HepG2 (cell line): ENCODE measurements at regions of chr18 and their contacts with region 1.

Region 1: DNA sequence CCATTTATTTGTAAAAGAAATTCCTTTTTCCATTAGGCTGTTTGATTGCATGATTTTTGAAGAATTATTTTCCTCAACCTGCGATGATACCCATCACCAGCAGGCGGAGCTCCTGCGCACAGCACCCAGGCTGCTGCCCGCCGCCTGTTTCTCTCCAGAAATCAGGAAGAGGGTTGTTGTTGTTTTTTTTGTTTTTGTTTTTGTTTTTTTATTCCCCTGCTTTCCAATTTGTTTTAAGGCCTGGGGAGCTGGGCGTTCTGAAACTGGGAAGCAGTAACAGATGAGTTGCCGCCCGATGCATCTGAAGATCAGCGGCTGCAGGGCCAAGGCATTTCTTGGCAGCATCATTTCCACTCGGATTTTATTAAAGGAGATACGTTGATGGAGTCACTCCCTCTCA is 132.1 kb downstream of the MBP start:
- DNase-seq: no peak
- ATAC-seq: no peak
- H3K4me3 ChIP-seq: no peak overlapping the region
- H3K27ac ChIP-seq: no peak overlapping the region
- H3K4me1 ChIP-seq: peaks cover 12% of the 10 kb centered on the region
- H3K27me3 ChIP-seq: no peaks in the 10 kb centered on the region; a peak in 1 of 5 replicates
- CTCF ChIP-seq: peak; percentile 79
- EP300 ChIP-seq: no peak
- POLR2A ChIP-seq: no peak
- RAD21 ChIP-seq: 0 out of 2 replicates have a peak, but pooled peaks have one; percentile 35

Region 2: DNA sequence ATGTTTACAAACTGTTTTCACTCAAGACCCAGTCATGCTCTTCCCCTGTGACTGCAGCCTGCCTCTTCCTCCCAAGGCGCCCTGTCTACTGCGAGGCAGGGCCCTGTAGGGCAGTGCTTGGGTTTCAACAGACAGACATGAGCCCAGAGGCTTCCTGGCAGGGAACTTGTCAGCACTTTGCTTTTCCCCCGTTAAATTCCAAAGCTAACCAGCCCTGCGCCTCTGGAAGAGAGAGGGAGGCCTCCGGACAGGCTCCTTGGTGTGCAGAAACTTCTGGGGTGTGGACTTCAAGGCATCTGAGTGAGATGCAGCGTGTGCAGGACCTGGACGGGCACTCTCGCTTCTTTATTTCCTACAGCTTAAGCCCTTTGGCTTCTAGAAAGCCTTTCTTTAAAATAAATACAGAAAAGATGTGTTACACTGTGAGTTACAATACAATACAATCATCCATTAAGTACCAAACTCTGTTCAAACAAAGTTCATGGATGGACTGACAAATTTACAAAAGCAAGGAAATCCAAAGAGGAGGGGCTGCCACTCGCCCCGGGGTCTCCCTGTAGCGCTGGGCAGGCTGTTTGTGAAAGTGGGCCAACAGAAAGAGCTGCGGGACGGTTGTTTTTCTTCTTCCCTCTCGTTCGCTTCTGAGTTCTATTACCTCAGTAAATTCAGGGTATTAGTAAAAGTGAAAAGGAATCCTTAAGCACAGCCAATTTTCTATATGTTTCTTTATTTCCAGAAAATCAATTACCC is 496.7 kb before region 1 on chr18:
- CTCF ChIA-PET with region 1: no interaction called
- POLR2A ChIA-PET with region 1: no interaction called
- in situ Hi-C with region 1: no loop called
- intact Hi-C with region 1: no loop called
- DNase-seq: no peak
- ATAC-seq: peak; percentile 45; the same call in 2 of the 3 replicates
- H3K4me3 ChIP-seq: no peak overlapping the region
- H3K27ac ChIP-seq: no peak overlapping the region
- H3K4me1 ChIP-seq: peaks cover 24% of the 10 kb centered on the region
- H3K27me3 ChIP-seq: peaks cover 1 to 18% of the 10 kb centered on the region in 2 experiments; a peak in 2 of 5 replicates
- CTCF ChIP-seq: no peak
- EP300 ChIP-seq: no peak
- POLR2A ChIP-seq: no peak
- RAD21 ChIP-seq: no peak

Region 3: DNA sequence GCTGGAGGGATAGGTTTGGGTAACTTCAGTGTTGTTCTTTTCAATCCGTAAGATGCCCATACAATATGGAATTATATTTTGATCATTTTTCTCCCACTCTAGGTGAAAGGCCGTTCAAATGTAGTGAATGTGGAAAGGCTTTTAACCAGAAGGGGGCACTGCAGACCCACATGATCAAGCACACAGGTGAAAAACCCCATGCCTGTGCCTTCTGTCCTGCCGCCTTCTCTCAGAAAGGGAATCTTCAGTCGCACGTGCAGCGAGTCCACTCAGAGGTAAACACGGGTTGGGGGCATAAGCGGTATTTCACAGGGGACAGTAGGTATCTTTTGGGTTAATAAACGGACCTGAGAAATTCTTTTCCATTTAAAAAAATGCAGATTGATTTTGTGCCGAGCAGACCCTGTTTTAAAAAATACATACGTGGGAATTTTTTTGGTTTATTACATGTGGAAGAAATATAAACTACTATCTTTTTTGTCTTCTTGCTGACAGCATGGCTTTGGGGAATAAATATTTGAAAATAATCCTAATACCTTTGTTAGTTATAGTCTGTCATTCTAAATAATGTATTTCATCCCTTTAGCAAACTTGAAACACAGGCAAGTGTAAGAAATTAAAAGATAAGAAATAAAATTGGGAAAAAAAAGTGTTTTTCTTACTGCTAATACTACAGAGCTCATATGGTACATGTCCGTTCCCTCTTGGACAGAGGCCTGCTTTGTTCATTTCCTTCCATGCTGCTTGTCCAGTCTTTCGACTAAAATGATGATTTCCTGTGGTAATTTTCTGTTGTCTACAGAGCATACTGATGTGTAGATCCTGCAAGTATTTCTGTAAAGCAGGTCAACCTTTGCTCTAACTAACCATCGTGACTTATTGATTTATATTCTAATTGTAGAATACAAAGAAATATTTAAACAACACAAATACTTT is 124.9 kb before region 1 on chr18:
- CTCF ChIA-PET with region 1: no interaction called
- POLR2A ChIA-PET with region 1: no interaction called
- in situ Hi-C with region 1: no loop called
- intact Hi-C with region 1: no loop called
- DNase-seq: peak; percentile 48
- ATAC-seq: peak; percentile 86
- H3K4me3 ChIP-seq: no peak overlapping the region
- H3K27ac ChIP-seq: no peak overlapping the region
- H3K4me1 ChIP-seq: no peaks in the 10 kb centered on the region
- H3K27me3 ChIP-seq: no peaks in the 10 kb centered on the region
- CTCF ChIP-seq: peak; percentile 75
- EP300 ChIP-seq: no peak
- POLR2A ChIP-seq: no peak
- RAD21 ChIP-seq: no peak

Region 4: DNA sequence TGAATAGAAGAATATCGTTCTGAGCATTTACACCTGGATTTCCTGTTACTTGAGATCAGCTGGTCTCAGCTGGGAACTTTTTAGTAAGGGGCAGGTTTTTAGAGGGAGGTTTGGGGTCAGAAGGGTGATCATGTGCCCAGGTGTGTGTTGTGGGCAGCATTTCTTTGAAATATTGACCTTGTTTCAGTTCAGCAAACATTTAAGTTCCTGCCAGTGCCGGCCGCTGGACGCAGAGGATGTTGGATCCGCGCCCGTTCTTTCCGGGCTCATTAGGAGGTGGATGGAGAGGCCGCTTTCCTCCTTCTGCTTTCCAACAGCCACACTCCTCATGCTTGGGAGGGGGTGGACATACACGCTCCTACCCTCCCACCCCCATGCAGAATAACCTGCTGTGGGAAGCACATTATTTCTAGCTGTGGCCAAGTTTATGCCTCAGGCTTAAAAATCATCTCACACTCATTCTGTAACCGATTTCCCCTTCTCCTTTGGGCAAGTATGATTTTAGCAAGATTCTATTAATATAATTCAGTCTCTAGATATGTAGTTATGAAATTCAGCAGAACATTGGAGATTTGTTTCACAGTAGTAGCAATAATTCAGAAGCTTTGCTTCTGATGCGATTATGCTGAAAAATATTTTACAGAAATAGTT is 46.8 kb before region 1 on chr18:
- CTCF ChIA-PET with region 1: no interaction called
- POLR2A ChIA-PET with region 1: no interaction called
- in situ Hi-C with region 1: no loop called
- intact Hi-C with region 1: no loop called
- DNase-seq: no peak
- ATAC-seq: peak; percentile 50; the same call in 2 of the 3 replicates
- H3K4me3 ChIP-seq: no peak overlapping the region
- H3K27ac ChIP-seq: no peak overlapping the region
- H3K4me1 ChIP-seq: peaks cover 14% of the 10 kb centered on the region
- H3K27me3 ChIP-seq: no peaks in the 10 kb centered on the region
- CTCF ChIP-seq: no peak
- EP300 ChIP-seq: no peak
- POLR2A ChIP-seq: no peak
- RAD21 ChIP-seq: no peak

Region 5: GRCh38 chr18:77054606-77055428 is 54.3 kb after region 1 on chr18:
- CTCF ChIA-PET with region 1: interaction called, 18 read pairs
- POLR2A ChIA-PET with region 1: no interaction called
- in situ Hi-C with region 1: loop called (anchors 5 kb)
- intact Hi-C with region 1: loop called (anchors 1 kb)
- DNase-seq: peak; percentile 87
- ATAC-seq: peak; percentile 92
- H3K4me3 ChIP-seq: peak overlapping the region in 1 of 3 experiments; percentile 58; a peak in 3 of 6 replicates
- H3K27ac ChIP-seq: peak overlapping the region; percentile 72
- H3K4me1 ChIP-seq: peaks cover 43% of the 10 kb centered on the region
- H3K27me3 ChIP-seq: no peaks in the 10 kb centered on the region
- CTCF ChIP-seq: peak; percentile 93
- EP300 ChIP-seq: peak in 1 of 2 experiments; percentile 28; a peak in 1 of 4 replicates
- POLR2A ChIP-seq: no peak
- RAD21 ChIP-seq: peak; percentile 82

Region 6: GRCh38 chr18:77132371-77133050 is 132.0 kb after region 1 on chr18 and contains the start of gene MBP:
- CTCF ChIA-PET with region 1: no interaction called
- POLR2A ChIA-PET with region 1: no interaction called
- in situ Hi-C with region 1: no loop called
- intact Hi-C with region 1: loop called (anchors 5 kb)
- DNase-seq: no peak
- ATAC-seq: peak; percentile 82
- H3K4me3 ChIP-seq: peak within 1 kb of the TSS; percentile 66 to 82 (median 73)
- H3K27ac ChIP-seq: no peak within 1 kb of the TSS
- H3K4me1 ChIP-seq: peaks cover 36% of the 10 kb centered on the region
- H3K27me3 ChIP-seq: peaks cover 4 to 36% of the 10 kb centered on the region in 2 experiments; a peak in 4 of 5 replicates
- CTCF ChIP-seq: no peak
- EP300 ChIP-seq: no peak
- POLR2A ChIP-seq: peak in 1 of 2 experiments; percentile 66; a peak in 1 of 4 replicates
- RAD21 ChIP-seq: no peak
- total RNA-seq, gene MBP: 5.0 TPM in 2 replicates

Region 7: GRCh38 chr18:77207540-77207939 is 207.0 kb after region 1 on chr18:
- CTCF ChIA-PET with region 1: interaction called, 4 read pairs
- POLR2A ChIA-PET with region 1: no interaction called
- in situ Hi-C with region 1: loop called (anchors 10 kb)
- intact Hi-C with region 1: loop called (anchors 1 kb)
- DNase-seq: peak; percentile 42
- ATAC-seq: peak; percentile 90
- H3K4me3 ChIP-seq: no peak overlapping the region
- H3K27ac ChIP-seq: no peak overlapping the region
- H3K4me1 ChIP-seq: no peaks in the 10 kb centered on the region
- H3K27me3 ChIP-seq: peaks cover 2 to 19% of the 10 kb centered on the region in 2 experiments; a peak in 3 of 5 replicates
- CTCF ChIP-seq: no peak
- EP300 ChIP-seq: no peak
- POLR2A ChIP-seq: no peak
- RAD21 ChIP-seq: no peak

Region 8: GRCh38 chr18:77650799-77651385 is 650.4 kb after region 1 on chr18:
- CTCF ChIA-PET with region 1: interaction called, 8 read pairs
- POLR2A ChIA-PET with region 1: no interaction called
- in situ Hi-C with region 1: loop called (anchors 10 kb)
- intact Hi-C with region 1: loop called (anchors 5 kb)
- DNase-seq: peak; percentile 24
- ATAC-seq: peak; percentile 96
- H3K4me3 ChIP-seq: no peak overlapping the region
- H3K27ac ChIP-seq: no peak overlapping the region
- H3K4me1 ChIP-seq: no peaks in the 10 kb centered on the region
- H3K27me3 ChIP-seq: peaks cover 0 to 13% of the 10 kb centered on the region in 2 experiments; a peak in 2 of 5 replicates
- CTCF ChIP-seq: peak; percentile 90
- EP300 ChIP-seq: no peak
- POLR2A ChIP-seq: no peak
- RAD21 ChIP-seq: peak; percentile 73